Panc1 (cell line): ENCODE measurements at regions of chr20 and their contacts with region 1.

Region 1: GRCh38 chr20:62571667-62572344 is 70.5 kb upstream of the SLCO4A1 start:
- DNase-seq: no peak
- ATAC-seq: peak; percentile 46
- H3K4me3 ChIP-seq: no peak overlapping the region
- H3K27ac ChIP-seq: peak overlapping the region; percentile 51; the same call in 1 of the 2 replicates
- H3K4me1 ChIP-seq: peaks cover 11% of the 10 kb centered on the region
- H3K27me3 ChIP-seq: no peaks in the 10 kb centered on the region
- CTCF ChIP-seq: no peak

Region 2: DNA sequence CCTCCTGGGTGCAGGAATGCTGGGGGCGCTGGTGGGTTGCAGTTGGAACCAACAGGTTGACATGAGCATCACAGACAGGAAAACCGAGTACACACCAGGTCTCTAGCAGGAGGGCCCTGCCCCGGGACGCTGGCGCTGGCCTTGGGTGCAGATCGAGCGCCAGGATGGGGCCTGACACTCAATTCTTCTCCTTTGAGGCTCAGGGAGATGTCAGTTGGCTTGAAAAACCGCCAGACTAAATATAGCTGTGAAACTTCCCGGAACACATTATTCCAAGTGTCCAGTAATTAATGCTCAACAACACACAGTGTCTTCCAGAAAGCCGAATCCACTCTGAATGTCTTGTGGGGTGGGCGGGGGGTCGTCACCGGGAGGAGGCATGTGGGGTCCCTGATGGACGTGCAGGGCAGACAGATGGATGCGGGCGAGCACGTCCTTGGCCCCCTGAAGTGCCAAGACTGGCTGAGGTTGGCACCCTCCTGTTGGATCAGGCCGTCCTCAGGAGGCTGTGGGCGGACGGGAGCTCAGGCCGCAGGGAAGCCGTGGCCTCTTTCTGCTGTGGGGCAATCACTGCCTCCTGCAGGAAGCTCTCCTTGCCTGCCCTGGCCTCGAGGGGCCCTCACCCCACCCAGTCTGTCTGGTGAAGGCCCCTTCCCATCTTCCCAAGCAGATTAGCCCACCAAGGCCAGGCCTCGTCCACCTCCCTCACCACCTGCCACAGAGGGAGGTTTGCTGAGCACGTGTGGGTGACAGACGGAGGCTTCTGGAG is 76.6 kb before region 1 on chr20:
- CTCF ChIA-PET with region 1: interaction called, 8 read pairs
- POLR2A ChIA-PET with region 1: interaction called, 13 read pairs
- in situ Hi-C with region 1: no loop called
- intact Hi-C with region 1: no loop called
- DNase-seq: no peak
- ATAC-seq: no peak
- H3K4me3 ChIP-seq: no peak overlapping the region
- H3K27ac ChIP-seq: peak overlapping the region; percentile 79
- H3K4me1 ChIP-seq: peaks cover 62% of the 10 kb centered on the region
- H3K27me3 ChIP-seq: no peaks in the 10 kb centered on the region
- CTCF ChIP-seq: no peak